ENCODE measurements at regions of chr11 and their contacts with region 1.

Region 1: GRCh38 chr11:61733120-61733978 is 19.1 kb upstream of the MYRF start:
- DNase-seq: peak; percentile 85
- H3K4me3 ChIP-seq: no peak overlapping the region
- H3K27ac ChIP-seq: no peak overlapping the region
- H3K4me1 ChIP-seq: no peaks in the 10 kb centered on the region
- CTCF ChIP-seq: peak; percentile 94

Region 2: GRCh38 chr11:61413496-61413895 is 319.9 kb before region 1 on chr11:
- CTCF ChIA-PET with region 1: no interaction called
- POLR2A ChIA-PET with region 1: no interaction called
- intact Hi-C with region 1: no loop called
- DNase-seq: no peak
- H3K4me3 ChIP-seq: no peak overlapping the region
- H3K27ac ChIP-seq: no peak overlapping the region
- H3K4me1 ChIP-seq: no peaks in the 10 kb centered on the region
- CTCF ChIP-seq: no peak

Region 3: DNA sequence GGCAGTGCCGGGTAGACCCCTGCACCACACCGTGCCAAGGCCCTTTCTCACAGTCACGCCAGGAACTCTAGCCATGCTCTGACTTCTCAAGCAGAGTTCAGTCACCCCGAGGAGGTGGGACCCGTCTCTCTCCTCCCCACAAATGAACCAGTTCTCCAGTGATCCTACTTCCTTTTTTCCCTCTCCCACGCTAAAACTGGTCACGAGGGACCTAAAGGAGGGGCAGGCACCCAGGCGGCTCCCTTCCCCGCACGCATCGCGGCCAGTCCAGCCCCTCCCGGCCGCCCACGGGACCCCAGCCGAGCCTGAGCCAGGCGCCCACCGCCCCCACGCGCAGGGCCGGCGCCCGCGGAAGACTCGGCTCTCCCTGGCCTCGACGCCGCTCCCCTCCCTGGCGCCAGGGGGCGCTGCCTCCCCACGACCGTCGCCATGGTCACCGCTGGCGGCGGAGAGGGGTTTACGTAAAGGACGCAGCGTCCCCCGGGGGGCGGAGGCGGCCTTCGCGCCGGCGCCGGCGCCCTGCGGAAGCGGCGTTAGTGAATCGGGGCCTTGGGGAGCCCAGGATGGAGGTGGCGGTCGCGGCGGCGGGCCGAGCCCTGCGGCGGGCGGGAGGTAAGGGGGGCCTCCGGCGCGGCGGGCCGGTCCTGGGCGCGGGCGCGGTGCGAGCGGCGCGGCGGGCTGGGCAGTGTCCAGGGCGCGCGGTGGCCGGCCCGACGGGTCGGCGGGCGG is 53.3 kb before region 1 on chr11 and contains the start of gene DAGLA:
- CTCF ChIA-PET with region 1: no interaction called
- POLR2A ChIA-PET with region 1: no interaction called
- intact Hi-C with region 1: loop called (anchors 5 kb)
- DNase-seq: no peak
- H3K4me3 ChIP-seq: no peak within 1 kb of the TSS
- H3K27ac ChIP-seq: no peak within 1 kb of the TSS
- H3K4me1 ChIP-seq: no peaks in the 10 kb centered on the region
- CTCF ChIP-seq: peak; percentile 70
- total RNA-seq, gene DAGLA: not detected in 2 replicates

Region 4: GRCh38 chr11:61704838-61705237 is 28.5 kb before region 1 on chr11:
- CTCF ChIA-PET with region 1: no interaction called
- POLR2A ChIA-PET with region 1: no interaction called
- intact Hi-C with region 1: no loop called
- DNase-seq: no peak
- H3K4me3 ChIP-seq: no peak overlapping the region
- H3K27ac ChIP-seq: no peak overlapping the region
- H3K4me1 ChIP-seq: no peaks in the 10 kb centered on the region
- CTCF ChIP-seq: no peak

Region 5: DNA sequence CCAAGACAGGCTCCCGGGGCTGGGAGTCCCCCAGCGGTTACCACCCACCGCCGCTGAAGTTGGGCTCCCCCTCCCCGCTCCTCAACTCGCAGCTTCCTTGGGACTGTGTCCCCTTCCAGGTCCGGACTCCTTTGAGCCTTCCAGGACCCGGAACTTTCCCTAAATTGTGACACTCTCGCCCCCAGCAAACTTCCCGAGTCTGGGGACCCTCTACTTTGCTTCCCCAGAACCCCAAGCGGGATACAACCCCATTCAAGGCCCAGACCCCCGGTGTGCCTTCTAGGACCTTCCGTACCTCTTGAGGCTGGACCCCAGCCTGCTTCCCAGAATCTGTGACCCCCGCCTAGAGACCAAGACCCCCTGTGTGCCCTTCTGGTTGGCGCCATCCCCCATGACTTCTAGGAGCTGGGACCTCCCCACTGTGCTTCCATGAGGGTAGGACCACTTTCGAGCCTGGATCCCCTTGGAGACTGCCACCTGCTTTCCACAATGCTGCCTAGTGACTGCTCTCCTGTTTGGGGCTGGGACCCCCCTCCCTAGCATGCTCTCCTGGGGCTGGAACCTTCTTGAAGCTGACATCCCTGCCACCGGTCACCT is 19.7 kb after region 1 on chr11:
- CTCF ChIA-PET with region 1: interaction called, 15 read pairs
- POLR2A ChIA-PET with region 1: no interaction called
- intact Hi-C with region 1: no loop called
- DNase-seq: no peak
- H3K4me3 ChIP-seq: no peak overlapping the region
- H3K27ac ChIP-seq: no peak overlapping the region
- H3K4me1 ChIP-seq: peaks cover 10% of the 10 kb centered on the region
- CTCF ChIP-seq: no peak

Region 6: GRCh38 chr11:61826930-61827570 is 93.7 kb after region 1 on chr11:
- CTCF ChIA-PET with region 1: no interaction called
- POLR2A ChIA-PET with region 1: no interaction called
- intact Hi-C with region 1: no loop called
- DNase-seq: no peak
- H3K4me3 ChIP-seq: no peak overlapping the region
- H3K27ac ChIP-seq: no peak overlapping the region
- H3K4me1 ChIP-seq: no peaks in the 10 kb centered on the region
- CTCF ChIP-seq: no peak